Naive thymus-derived CD4-positive, alpha-beta T cell (primary cell): ENCODE measurements at regions of chr3 and their contacts with region 1.

Region 1: DNA sequence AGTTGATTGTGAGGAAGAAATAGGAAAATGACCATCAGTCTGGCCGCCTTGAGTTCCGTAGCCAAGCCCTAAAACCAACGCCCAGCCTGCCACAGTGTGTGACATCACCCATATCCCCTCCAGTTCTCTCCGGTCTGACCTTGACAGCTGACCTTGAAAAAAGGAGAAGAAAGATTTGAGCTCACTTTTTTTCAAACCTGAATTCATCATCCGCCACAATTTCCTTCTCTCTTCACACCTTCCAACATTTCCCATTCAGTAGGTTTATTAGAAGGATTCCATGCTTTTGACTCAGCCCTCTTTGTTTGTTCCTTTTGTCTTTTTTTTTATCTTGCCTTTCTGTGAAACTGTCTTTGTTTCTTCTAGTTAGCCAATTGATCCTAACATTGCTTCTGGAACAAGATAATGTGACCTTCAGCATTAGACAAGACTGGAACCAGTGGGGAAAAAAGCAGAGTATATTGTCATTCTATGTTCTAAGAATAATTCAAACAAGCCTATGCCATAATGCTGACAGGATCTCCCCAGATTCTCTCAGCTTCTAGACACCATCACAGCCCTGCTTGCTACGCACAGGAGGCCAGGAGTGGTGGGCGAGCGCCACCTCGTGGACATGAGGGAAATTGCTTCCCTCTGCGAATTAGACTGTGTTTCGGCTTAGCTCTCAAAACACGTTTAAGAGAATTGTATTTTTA is 283.1 kb downstream of the FGF12 start:
- DNase-seq: peak in 7 of 9 donors; percentile 11 to 60 (median 16)
- ATAC-seq: peak; percentile 65
- H3K4me3 ChIP-seq: no peak overlapping the region
- H3K4me3 Mint-ChIP-seq: no peak overlapping the region
- H3K27ac ChIP-seq: no peak overlapping the region
- H3K27ac Mint-ChIP-seq: no peak overlapping the region
- H3K4me1 ChIP-seq: no peaks in the 10 kb centered on the region
- H3K4me1 Mint-ChIP-seq: no peaks in the 10 kb centered on the region
- H3K27me3 ChIP-seq: no peaks in the 10 kb centered on the region
- H3K27me3 Mint-ChIP-seq: peaks cover 15 to 33% (median 25%) of the 10 kb centered on the region in 5 donors

Region 2: GRCh38 chr3:190883973-190884832 is 1560.0 kb before region 1 on chr3:
- CTCF ChIA-PET with region 1: no interaction called
- POLR2A ChIA-PET with region 1: no interaction called
- intact Hi-C with region 1: loop called in 1 of 2 experiments (anchors 5 kb)
- DNase-seq: peak in 2 of 9 donors; percentile 8 to 19
- ATAC-seq: no peak
- H3K4me3 ChIP-seq: no peak overlapping the region
- H3K4me3 Mint-ChIP-seq: no peak overlapping the region
- H3K27ac ChIP-seq: no peak overlapping the region
- H3K27ac Mint-ChIP-seq: no peak overlapping the region
- H3K4me1 ChIP-seq: no peaks in the 10 kb centered on the region
- H3K4me1 Mint-ChIP-seq: no peaks in the 10 kb centered on the region
- H3K27me3 ChIP-seq: no peaks in the 10 kb centered on the region
- H3K27me3 Mint-ChIP-seq: peaks cover 0 to 14% (median 4%) of the 10 kb centered on the region in 5 donors

Region 3: GRCh38 chr3:191417457-191417729 is 1026.8 kb before region 1 on chr3:
- CTCF ChIA-PET with region 1: no interaction called
- POLR2A ChIA-PET with region 1: no interaction called
- intact Hi-C with region 1: loop called in 1 of 2 experiments (anchors 1 kb)
- DNase-seq: no peak
- ATAC-seq: no peak
- H3K4me3 ChIP-seq: no peak overlapping the region
- H3K4me3 Mint-ChIP-seq: no peak overlapping the region
- H3K27ac ChIP-seq: no peak overlapping the region
- H3K27ac Mint-ChIP-seq: no peak overlapping the region
- H3K4me1 ChIP-seq: no peaks in the 10 kb centered on the region
- H3K4me1 Mint-ChIP-seq: no peaks in the 10 kb centered on the region
- H3K27me3 ChIP-seq: no peaks in the 10 kb centered on the region
- H3K27me3 Mint-ChIP-seq: peaks cover 0 to 4% (median 0%) of the 10 kb centered on the region in 5 donors

Region 4: DNA sequence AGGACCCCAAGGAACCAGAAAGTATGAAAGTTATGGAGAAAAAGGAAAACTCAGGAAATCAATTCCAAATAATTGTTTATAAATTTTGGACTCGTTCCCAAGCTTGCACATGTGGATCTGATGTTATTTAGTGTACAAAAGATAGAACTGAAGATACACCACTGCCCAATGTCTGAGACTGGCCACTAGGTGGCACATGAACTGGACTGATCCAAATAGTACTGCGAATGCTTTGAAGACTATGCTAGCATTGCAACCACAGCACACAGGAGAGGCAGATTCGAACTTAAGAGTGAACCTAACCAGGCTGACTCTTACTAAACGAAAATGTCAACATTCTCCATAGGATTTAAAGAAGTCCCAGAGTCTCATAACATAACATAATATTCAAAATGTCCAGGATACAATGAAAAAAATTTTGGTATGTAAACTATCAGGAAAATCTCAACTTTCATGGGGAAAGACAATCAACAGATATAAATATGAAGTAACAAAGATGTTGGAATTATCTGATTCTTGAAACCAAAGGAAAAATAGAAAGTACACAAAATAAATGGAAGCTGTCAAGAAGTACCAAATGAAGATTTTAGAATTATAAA is 313.6 kb before region 1 on chr3:
- CTCF ChIA-PET with region 1: no interaction called
- POLR2A ChIA-PET with region 1: no interaction called
- intact Hi-C with region 1: loop called in 1 of 2 experiments (anchors 1 kb)
- DNase-seq: no peak
- ATAC-seq: no peak
- H3K4me3 ChIP-seq: no peak overlapping the region
- H3K4me3 Mint-ChIP-seq: no peak overlapping the region
- H3K27ac ChIP-seq: no peak overlapping the region
- H3K27ac Mint-ChIP-seq: no peak overlapping the region
- H3K4me1 ChIP-seq: no peaks in the 10 kb centered on the region
- H3K4me1 Mint-ChIP-seq: no peaks in the 10 kb centered on the region
- H3K27me3 ChIP-seq: no peaks in the 10 kb centered on the region
- H3K27me3 Mint-ChIP-seq: peaks cover 0 to 5% (median 0%) of the 10 kb centered on the region in 5 donors

Region 5: DNA sequence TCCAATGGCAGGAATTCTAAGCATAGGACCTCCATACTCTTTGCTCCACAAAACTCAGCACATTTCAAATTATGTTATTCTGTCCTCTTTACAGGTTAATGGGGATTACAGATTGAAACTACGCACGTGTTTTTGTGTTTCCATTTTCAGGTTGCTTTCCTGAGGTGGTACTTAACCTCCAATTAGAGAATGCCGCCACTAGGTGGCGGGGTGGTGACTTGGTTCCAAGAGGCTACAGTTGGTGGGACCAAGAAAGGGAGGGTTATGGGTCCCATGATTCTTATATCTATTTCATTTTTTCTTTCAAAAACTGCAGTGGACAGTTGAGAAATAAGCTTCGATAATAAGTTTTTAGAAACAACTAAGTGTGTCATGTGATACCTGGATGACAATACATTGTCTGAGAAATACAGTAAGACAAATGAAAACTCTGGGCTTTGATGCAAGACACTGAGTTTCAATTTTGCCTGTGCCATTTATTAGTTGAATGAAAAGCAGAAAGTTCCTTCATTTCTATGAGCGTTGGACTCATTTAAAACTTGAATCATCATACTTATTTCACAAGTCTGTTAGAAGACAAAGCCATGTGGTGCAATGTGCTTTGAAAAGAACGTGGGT is 255.9 kb before region 1 on chr3:
- CTCF ChIA-PET with region 1: no interaction called
- POLR2A ChIA-PET with region 1: no interaction called
- intact Hi-C with region 1: loop called in 1 of 2 experiments (anchors 1 kb)
- DNase-seq: peak in 3 of 9 donors; percentile 0 to 32 (median 2)
- ATAC-seq: no peak
- H3K4me3 ChIP-seq: no peak overlapping the region
- H3K4me3 Mint-ChIP-seq: no peak overlapping the region
- H3K27ac ChIP-seq: no peak overlapping the region
- H3K27ac Mint-ChIP-seq: no peak overlapping the region
- H3K4me1 ChIP-seq: no peaks in the 10 kb centered on the region
- H3K4me1 Mint-ChIP-seq: peaks cover 0 to 6% (median 0%) of the 10 kb centered on the region in 7 donors
- H3K27me3 ChIP-seq: no peaks in the 10 kb centered on the region
- H3K27me3 Mint-ChIP-seq: no peaks in the 10 kb centered on the region

Region 6: GRCh38 chr3:192608726-192609600 is 164.7 kb after region 1 on chr3:
- CTCF ChIA-PET with region 1: no interaction called
- POLR2A ChIA-PET with region 1: no interaction called
- intact Hi-C with region 1: no loop called
- DNase-seq: no peak
- ATAC-seq: no peak
- H3K4me3 ChIP-seq: no peak overlapping the region
- H3K4me3 Mint-ChIP-seq: no peak overlapping the region
- H3K27ac ChIP-seq: no peak overlapping the region
- H3K27ac Mint-ChIP-seq: no peak overlapping the region
- H3K4me1 ChIP-seq: no peaks in the 10 kb centered on the region
- H3K4me1 Mint-ChIP-seq: no peaks in the 10 kb centered on the region
- H3K27me3 ChIP-seq: no peaks in the 10 kb centered on the region
- H3K27me3 Mint-ChIP-seq: peaks cover 0 to 3% (median 0%) of the 10 kb centered on the region in 5 donors

Region 7: GRCh38 chr3:193262709-193263108 is 818.5 kb after region 1 on chr3:
- CTCF ChIA-PET with region 1: no interaction called
- POLR2A ChIA-PET with region 1: no interaction called
- intact Hi-C with region 1: no loop called
- DNase-seq: no peak
- ATAC-seq: no peak
- H3K4me3 ChIP-seq: no peak overlapping the region
- H3K4me3 Mint-ChIP-seq: no peak overlapping the region
- H3K27ac ChIP-seq: no peak overlapping the region
- H3K27ac Mint-ChIP-seq: no peak overlapping the region
- H3K4me1 ChIP-seq: no peaks in the 10 kb centered on the region
- H3K4me1 Mint-ChIP-seq: no peaks in the 10 kb centered on the region
- H3K27me3 ChIP-seq: no peaks in the 10 kb centered on the region
- H3K27me3 Mint-ChIP-seq: peaks cover 0 to 11% (median 0%) of the 10 kb centered on the region in 5 donors